Common myeloid progenitor, CD34-positive (primary cell): ENCODE measurements at regions of chr1 and their contacts with region 1.

Region 1: GRCh38 chr1:206912445-206913095 is 9.2 kb downstream of the FCMR start:
- DNase-seq: peak; percentile 74 to 84 (median 77)
- H3K4me3 ChIP-seq: no peak overlapping the region
- H3K27ac ChIP-seq: no peak overlapping the region
- H3K4me1 ChIP-seq: peaks cover 3 to 27% (median 13%) of the 10 kb centered on the region in 4 experiments
- H3K27me3 ChIP-seq: peaks cover 0 to 9% (median 0%) of the 10 kb centered on the region in 5 experiments

Region 2: GRCh38 chr1:206635080-206635977 is 277.2 kb before region 1 on chr1 and contains the start of gene DYRK3:
- CTCF ChIA-PET with region 1: interaction called, 17 read pairs
- POLR2A ChIA-PET with region 1: no interaction called
- DNase-seq: peak; percentile 91 to 93 (median 92)
- H3K4me3 ChIP-seq: peak within 1 kb of the TSS; percentile 76 to 98 (median 85)
- H3K27ac ChIP-seq: peak within 1 kb of the TSS; percentile 82 to 86
- H3K4me1 ChIP-seq: peaks cover 11 to 29% (median 22%) of the 10 kb centered on the region in 4 experiments
- H3K27me3 ChIP-seq: no peaks in the 10 kb centered on the region

Region 3: DNA sequence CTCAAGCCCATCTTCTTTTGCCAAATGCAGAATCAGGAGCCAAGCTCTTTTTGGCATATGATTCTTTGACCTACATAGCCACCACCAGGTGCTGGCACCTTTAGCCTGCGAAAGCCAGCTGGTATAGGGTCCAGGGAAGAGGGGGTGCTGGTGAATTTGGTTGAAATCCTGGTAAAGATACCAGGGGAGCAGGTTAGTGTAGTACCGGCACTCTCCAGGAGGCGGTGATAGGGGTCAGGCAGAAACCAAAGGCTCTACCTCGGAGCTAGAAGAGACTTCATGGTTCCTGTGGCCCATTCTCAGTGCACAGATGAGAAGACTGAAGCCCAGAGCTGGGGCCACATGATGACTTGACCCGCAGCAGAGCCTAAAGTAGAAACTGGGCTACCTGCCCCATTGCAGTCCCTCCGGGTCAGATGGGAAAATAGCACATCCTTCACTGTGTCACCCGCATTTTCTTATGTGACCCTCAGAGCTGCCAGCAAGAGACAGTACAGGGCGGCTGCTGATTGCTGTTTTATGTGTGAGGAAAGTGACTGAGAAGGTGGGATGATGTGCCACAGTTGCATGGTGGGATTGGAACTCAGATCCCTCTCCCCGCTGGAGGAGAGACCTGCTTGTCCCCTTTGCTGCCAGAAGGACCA is 177.9 kb before region 1 on chr1:
- CTCF ChIA-PET with region 1: interaction called, 37 read pairs
- POLR2A ChIA-PET with region 1: no interaction called
- DNase-seq: peak; percentile 36 to 69 (median 65)
- H3K4me3 ChIP-seq: no peak overlapping the region
- H3K27ac ChIP-seq: no peak overlapping the region
- H3K4me1 ChIP-seq: peaks cover 0 to 38% (median 36%) of the 10 kb centered on the region in 4 experiments
- H3K27me3 ChIP-seq: no peaks in the 10 kb centered on the region

Region 4: DNA sequence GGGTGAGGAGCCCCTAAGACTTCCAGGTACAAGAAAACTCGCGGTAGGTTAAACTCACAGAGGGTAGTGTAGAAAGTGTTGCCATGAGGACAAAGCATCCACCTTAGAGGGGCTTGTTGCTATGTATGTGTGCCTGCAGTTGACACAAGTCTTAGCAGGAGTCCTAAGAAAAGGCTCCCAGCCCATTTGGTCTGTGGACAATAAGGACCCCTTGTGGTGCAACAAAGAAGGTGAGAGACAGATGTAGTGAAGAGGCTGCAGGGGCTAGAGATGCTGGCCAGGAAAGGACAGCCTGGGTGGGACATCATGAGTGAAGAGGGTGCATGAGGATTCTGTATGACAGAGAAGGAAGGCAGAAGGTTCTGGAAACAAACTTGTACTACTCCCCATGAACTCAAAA is 104.0 kb before region 1 on chr1:
- CTCF ChIA-PET with region 1: interaction called, 76 read pairs
- POLR2A ChIA-PET with region 1: no interaction called
- DNase-seq: peak; percentile 63 to 84 (median 81)
- H3K4me3 ChIP-seq: no peak overlapping the region
- H3K27ac ChIP-seq: no peak overlapping the region
- H3K4me1 ChIP-seq: no peaks in the 10 kb centered on the region
- H3K27me3 ChIP-seq: no peaks in the 10 kb centered on the region

Region 5: GRCh38 chr1:206865013-206865671 is 47.4 kb before region 1 on chr1 and contains the start of gene IL20:
- CTCF ChIA-PET with region 1: interaction called, 14 read pairs
- POLR2A ChIA-PET with region 1: no interaction called
- DNase-seq: peak; percentile 78 to 90 (median 83)
- H3K4me3 ChIP-seq: no peak within 1 kb of the TSS
- H3K27ac ChIP-seq: no peak within 1 kb of the TSS
- H3K4me1 ChIP-seq: peaks cover 0 to 1% (median 0%) of the 10 kb centered on the region in 4 experiments
- H3K27me3 ChIP-seq: no peaks in the 10 kb centered on the region

Region 6: DNA sequence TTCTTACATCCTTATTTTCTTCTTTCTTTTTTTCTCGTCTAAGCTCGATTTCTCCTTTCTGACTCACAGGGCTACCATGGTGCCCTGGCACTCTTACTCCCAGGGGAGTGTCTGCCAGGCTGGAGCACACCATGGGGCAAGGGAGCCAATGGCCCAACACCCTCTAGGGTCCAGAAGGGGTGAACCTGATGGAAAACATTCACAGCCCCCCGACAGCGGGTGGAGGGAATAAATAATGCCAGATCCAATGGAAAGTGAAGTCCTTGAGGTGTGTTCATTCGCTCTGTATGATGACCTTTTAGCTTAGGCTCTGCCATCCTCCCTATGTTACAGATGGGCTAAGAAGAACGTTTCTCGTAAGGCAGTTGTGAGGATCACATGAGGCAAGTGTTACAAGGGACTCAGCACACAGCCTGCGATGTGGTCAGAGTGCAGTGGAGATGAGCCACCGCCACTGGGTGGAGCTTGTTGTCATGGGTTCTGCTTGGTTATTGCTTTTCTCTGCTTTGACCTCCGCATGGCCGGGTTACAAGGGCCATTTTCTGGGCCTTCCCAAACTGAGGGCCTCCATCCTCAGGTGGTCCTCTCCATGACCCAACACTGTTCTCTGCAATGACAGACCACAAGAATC is 12.7 kb after region 1 on chr1:
- CTCF ChIA-PET with region 1: interaction called, 44 read pairs
- POLR2A ChIA-PET with region 1: interaction called, 7 read pairs
- DNase-seq: peak in 1 of 3 donors; percentile 57
- H3K4me3 ChIP-seq: no peak overlapping the region
- H3K27ac ChIP-seq: no peak overlapping the region
- H3K4me1 ChIP-seq: peaks cover 20 to 49% (median 46%) of the 10 kb centered on the region in 4 experiments
- H3K27me3 ChIP-seq: no peaks in the 10 kb centered on the region

Region 7: GRCh38 chr1:207058878-207059867 is 146.6 kb after region 1 on chr1:
- CTCF ChIA-PET with region 1: no interaction called
- POLR2A ChIA-PET with region 1: no interaction called
- DNase-seq: peak in 2 of 3 donors; percentile 40 to 65
- H3K4me3 ChIP-seq: peak overlapping the region in 1 of 7 experiments; percentile 42
- H3K27ac ChIP-seq: no peak overlapping the region
- H3K4me1 ChIP-seq: peaks cover 21 to 40% (median 27%) of the 10 kb centered on the region in 4 experiments
- H3K27me3 ChIP-seq: no peaks in the 10 kb centered on the region